Activated naive CD4-positive, alpha-beta T cell treated with anti-CD3 and anti-CD28 coated beads for 36 hours (primary cell): ENCODE measurements at regions of chr2 and their contacts with region 1.

Region 1: DNA sequence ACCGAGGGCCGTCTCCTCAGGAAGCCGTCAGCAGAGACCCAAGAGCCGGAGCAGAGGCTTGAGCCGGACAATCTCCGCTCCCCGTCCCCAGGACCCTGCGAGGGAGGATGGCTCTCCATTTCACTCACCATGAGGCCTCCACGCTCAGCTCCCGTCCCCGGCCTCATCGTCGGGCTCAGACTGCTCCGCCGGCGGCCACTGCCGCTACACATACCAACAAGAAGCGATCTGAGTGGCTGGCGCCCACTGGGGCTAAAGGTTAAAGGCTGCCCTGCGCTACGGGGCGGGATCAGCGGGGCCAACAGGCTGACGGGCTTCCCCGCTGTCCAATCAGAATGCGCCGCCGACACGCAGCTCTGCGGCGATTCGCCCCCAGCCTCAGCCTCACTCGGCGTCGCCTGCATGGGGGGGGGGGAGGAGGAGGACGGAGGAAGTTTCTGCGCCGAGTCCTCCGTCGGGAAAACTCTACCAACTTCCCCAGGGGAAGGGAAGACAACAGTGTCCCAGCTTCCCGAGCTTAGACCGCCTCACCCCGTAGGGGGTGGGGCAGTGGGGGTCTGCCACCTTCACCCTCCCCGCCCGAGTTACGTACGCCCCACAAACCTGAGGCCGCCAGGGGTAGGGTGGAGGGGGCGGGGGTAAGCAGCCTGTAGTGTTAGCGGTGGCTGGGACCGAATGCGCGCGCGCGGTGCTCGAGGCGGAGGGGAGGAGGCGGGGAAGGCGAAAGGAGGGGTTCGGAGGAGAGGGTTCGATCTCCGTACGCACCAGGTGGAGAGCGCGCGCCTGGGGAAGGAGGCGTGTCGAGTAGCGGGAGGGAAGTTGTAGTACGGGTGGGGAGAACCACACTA is at the start of gene PRPF40A:
- DNase-seq: peak; percentile 98
- H3K4me3 Mint-ChIP-seq: peak within 1 kb of the TSS; percentile 100
- H3K27ac Mint-ChIP-seq: peak within 1 kb of the TSS; percentile 99
- H3K4me1 Mint-ChIP-seq: peaks cover 52% of the 10 kb centered on the region
- H3K27me3 Mint-ChIP-seq: no peaks in the 10 kb centered on the region
- total RNA-seq, gene PRPF40A: 123 to 128 TPM

Region 2: GRCh38 chr2:151828143-151828889 is 889.1 kb before region 1 on chr2 and contains the start of gene ARL5A:
- CTCF ChIA-PET with region 1: no interaction called
- intact Hi-C with region 1: loop called (anchors 2 kb)
- DNase-seq: peak; percentile 94
- H3K4me3 Mint-ChIP-seq: peak within 1 kb of the TSS; percentile 95
- H3K27ac Mint-ChIP-seq: peak within 1 kb of the TSS; percentile 82
- H3K4me1 Mint-ChIP-seq: peaks cover 39% of the 10 kb centered on the region
- H3K27me3 Mint-ChIP-seq: no peaks in the 10 kb centered on the region
- total RNA-seq, gene ARL5A: 40.6 to 43.7 TPM

Region 3: GRCh38 chr2:152335010-152335725 is 382.3 kb before region 1 on chr2 and contains the start of gene FMNL2:
- CTCF ChIA-PET with region 1: no interaction called
- intact Hi-C with region 1: loop called (anchors 2 kb)
- DNase-seq: peak; percentile 64
- H3K4me3 Mint-ChIP-seq: peak within 1 kb of the TSS; percentile 80
- H3K27ac Mint-ChIP-seq: no peak within 1 kb of the TSS
- H3K4me1 Mint-ChIP-seq: peaks cover 8% of the 10 kb centered on the region
- H3K27me3 Mint-ChIP-seq: peaks cover 41% of the 10 kb centered on the region
- total RNA-seq, gene FMNL2: 2.5 to 2.7 TPM

Region 4: DNA sequence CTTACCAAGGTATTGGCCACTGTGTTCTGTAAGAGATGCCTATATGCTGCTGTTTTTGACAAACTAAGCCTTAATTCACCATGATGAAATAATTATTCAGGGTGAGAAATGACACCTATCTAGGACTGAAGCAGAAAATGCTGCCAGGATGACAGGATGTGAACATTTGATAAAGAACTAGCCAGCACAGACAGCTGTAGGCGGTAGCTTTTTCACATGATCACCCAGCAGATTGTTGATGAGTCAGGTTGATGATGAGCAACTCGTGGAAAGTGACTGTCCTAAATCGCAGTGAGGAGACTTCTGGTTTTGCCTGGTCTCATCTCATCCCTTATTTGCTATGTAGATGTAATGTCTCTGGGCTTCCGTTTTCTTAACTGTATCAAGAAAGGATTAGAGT is 144.3 kb before region 1 on chr2:
- CTCF ChIA-PET with region 1: no interaction called
- intact Hi-C with region 1: loop called (anchors 1 kb)
- DNase-seq: peak; percentile 75
- H3K4me3 Mint-ChIP-seq: no peak overlapping the region
- H3K27ac Mint-ChIP-seq: no peak overlapping the region
- H3K4me1 Mint-ChIP-seq: peaks cover 7% of the 10 kb centered on the region
- H3K27me3 Mint-ChIP-seq: peaks cover 9% of the 10 kb centered on the region

Region 5: DNA sequence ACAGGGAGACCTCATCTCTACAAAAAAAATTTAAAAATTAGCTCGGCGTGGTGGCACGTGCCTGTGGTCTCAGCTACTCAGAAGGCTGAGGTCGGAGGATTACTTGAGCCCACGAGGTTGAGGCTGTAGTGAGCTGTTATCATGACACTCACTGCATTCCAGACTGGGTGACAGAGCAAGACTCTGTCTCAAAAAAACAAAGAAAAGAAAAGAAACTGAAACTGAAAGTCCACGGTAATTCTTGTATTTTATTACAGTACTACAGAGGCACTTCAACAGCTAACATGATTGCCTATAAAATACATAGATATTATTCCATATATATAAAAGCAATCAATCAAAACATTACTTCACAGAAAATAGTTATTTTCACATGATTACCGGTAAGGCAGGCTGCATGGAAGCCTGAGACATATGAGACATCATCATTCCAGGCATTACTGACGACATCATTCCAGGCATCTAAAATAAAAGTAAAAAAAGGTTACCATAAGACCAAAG is 23.2 kb before region 1 on chr2:
- CTCF ChIA-PET with region 1: interaction called, 4 read pairs
- intact Hi-C with region 1: loop called (anchors 1 kb)
- DNase-seq: peak; percentile 56
- H3K4me3 Mint-ChIP-seq: peak overlapping the region; percentile 70
- H3K27ac Mint-ChIP-seq: peak overlapping the region; percentile 86
- H3K4me1 Mint-ChIP-seq: peaks cover 34% of the 10 kb centered on the region
- H3K27me3 Mint-ChIP-seq: no peaks in the 10 kb centered on the region

Region 6: DNA sequence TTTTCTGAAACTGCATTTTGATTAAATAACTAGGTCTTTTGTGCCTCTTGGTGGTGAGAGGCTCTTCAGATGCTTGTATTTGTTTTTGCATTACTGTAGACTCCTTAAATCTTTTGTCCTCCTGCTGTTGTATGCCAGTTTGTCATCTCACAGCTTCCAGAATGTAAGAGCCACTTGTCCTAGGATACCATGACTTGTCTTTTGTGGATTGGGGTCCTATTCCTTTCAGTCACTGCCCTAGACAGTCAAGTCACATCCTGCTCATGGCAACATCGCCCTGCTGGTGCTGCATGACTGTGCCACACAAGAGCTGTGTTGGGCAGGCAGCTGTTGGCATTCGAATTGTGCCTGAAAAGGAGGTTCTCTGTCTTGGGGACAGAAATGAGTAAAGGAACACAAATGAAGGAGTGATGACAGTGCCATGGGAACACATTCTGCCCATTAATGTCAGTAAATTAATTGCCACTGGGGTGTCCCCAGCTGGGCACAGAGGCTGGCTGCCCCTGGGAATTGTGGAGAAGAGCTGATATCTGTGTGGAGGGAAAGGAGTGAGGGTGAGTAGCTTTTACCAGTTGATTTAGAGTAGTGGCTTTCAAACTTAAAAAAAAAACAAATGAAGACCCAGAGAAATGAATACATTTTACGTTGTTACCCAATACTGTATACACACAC is 141.3 kb after region 1 on chr2:
- CTCF ChIA-PET with region 1: no interaction called
- intact Hi-C with region 1: no loop called
- DNase-seq: no peak
- H3K4me3 Mint-ChIP-seq: no peak overlapping the region
- H3K27ac Mint-ChIP-seq: no peak overlapping the region
- H3K4me1 Mint-ChIP-seq: no peaks in the 10 kb centered on the region
- H3K27me3 Mint-ChIP-seq: peaks cover 13% of the 10 kb centered on the region